ENCODE measurements at regions of chr10 and their contacts with region 1.

Region 1: GRCh38 chr10:30013757-30014156 is 45.6 kb downstream of the JCAD start:
- H3K4me3 ChIP-seq: no peak overlapping the region
- H3K27ac ChIP-seq: no peak overlapping the region
- H3K4me1 ChIP-seq: no peaks in the 10 kb centered on the region
- CTCF ChIP-seq: no peak

Region 2: DNA sequence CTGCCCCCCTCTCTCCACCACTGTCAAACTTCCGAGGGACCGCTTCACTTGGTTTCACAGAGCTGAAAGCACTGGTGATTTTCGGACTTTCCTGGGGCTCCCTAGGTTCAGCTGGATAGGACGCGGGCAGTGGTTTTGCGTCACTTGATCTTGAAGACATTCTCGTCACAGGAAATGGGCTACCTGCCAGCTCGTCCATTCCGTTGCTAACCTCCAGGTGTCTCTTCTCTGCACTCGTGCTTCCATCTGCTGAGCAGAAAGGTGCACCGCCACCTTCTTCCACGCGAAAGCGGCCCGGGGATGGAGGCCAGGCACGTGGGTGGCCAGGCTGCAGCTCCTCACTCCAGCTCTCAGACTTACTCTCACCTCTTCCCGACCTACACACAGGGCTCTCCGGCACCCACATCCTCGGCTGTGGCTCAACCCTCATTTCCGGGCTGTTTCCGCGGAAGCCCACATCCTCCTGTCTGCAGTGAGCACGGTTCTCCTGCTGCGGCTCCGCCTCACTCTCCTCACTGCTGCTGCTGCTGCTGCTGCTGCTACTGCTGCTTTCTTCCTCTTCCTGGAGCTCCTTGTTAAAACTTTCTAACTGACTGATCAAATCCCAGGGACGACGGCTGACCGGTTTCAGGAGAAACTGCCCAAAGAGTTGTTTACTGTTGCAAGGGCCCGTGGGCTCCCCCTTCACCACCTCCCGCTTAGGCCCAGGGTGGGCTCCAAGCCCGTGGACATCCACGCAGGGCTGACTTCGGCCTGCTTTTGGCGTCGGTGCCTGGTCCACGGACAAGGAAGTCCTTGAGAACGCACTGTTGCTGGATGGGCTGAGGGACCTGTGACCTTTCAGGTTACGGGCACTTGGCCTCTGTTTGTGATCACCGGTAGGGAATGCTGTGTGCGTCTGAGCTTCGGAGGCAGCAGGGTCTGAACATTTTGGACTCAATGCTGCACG is 13.6 kb after region 1 on chr10:
- CTCF ChIA-PET with region 1: no interaction called
- POLR2A ChIA-PET with region 1: no interaction called
- H3K4me3 ChIP-seq: no peak overlapping the region
- H3K27ac ChIP-seq: no peak overlapping the region
- H3K4me1 ChIP-seq: no peaks in the 10 kb centered on the region
- CTCF ChIP-seq: no peak

Region 3: GRCh38 chr10:30037620-30038336 is 24.0 kb after region 1 on chr10:
- CTCF ChIA-PET with region 1: interaction called, 3 read pairs
- POLR2A ChIA-PET with region 1: interaction called, 11 read pairs
- H3K4me3 ChIP-seq: no peak overlapping the region
- H3K27ac ChIP-seq: no peak overlapping the region
- H3K4me1 ChIP-seq: peaks cover 4% of the 10 kb centered on the region; the same call in 1 of the 2 replicates
- CTCF ChIP-seq: no peak